ENCODE measurements at regions of chr18 and their contacts with region 1.

Region 1: DNA sequence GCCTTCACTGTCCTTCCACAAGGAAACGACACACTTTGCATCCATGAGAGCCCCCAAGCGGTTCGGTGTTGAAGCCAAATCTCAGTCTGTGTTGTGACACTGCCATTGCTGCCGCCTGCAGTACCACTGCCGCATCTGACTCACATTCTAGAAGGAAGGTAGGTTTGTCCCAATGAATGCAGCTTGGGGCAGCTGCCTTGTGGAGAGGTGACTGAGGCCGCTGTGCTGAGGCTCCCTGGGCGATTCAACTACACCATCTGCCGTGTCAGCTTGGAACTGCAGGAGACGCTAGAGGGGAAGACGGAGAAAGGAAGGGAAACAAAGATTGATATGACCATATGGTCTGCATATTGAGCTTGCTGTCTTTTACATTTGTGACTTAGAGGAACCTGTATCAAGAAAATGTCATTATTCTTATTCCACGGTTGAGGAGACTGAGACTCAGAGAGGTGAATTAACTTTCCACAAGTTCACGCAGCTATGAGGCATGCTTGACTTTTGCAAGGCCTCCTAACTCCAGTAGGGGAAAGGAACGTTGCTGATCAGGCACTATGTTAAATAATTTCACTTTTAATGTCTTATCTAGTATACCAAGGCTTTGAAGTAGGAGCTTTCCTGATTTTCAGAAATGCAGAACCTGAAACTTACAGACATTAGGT is 43.5 kb upstream of the LMAN1 start:
- DNase-seq: peak; percentile 88
- ATAC-seq: peak; percentile 100
- H3K4me3 Mint-ChIP-seq: no peak overlapping the region
- H3K27ac Mint-ChIP-seq: no peak overlapping the region
- H3K4me1 Mint-ChIP-seq: no peaks in the 10 kb centered on the region
- H3K27me3 Mint-ChIP-seq: no peaks in the 10 kb centered on the region

Region 2: DNA sequence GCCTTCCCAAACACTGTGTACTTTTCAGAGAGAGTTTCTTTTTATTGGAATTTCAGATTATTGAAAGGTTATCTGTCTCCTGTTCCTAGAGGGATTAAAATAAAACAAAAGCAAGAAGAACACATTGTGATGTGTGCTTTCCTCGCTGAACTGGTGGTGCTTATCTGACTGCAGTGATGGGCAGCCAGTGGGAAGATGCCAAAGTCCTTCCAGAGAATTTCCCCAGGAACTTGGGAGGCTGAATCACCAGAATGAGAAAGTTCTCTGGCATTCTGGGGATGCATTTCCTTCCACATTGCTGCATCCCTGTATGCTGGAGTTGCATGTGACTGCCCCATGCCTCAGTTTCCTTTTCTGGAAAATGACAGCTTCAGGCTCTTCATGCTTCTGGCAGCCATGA is 316.8 kb before region 1 on chr18:
- CTCF ChIA-PET with region 1: interaction called, 12 read pairs
- POLR2A ChIA-PET with region 1: no interaction called
- intact Hi-C with region 1: loop called (anchors 5 kb)
- DNase-seq: no peak
- ATAC-seq: no peak
- H3K4me3 Mint-ChIP-seq: no peak overlapping the region
- H3K27ac Mint-ChIP-seq: no peak overlapping the region
- H3K4me1 Mint-ChIP-seq: peaks cover 12% of the 10 kb centered on the region
- H3K27me3 Mint-ChIP-seq: peaks cover 13% of the 10 kb centered on the region

Region 3: GRCh38 chr18:59268721-59269562 is 133.6 kb before region 1 on chr18:
- CTCF ChIA-PET with region 1: interaction called, 21 read pairs
- POLR2A ChIA-PET with region 1: no interaction called
- intact Hi-C with region 1: loop called in 1 of 2 experiments (anchors 2 kb)
- DNase-seq: peak; percentile 82
- ATAC-seq: peak; percentile 76
- H3K4me3 Mint-ChIP-seq: peak overlapping the region; percentile 32
- H3K27ac Mint-ChIP-seq: no peak overlapping the region
- H3K4me1 Mint-ChIP-seq: peaks cover 32% of the 10 kb centered on the region
- H3K27me3 Mint-ChIP-seq: peaks cover 77% of the 10 kb centered on the region

Region 4: GRCh38 chr18:59308248-59308937 is 94.2 kb before region 1 on chr18:
- CTCF ChIA-PET with region 1: interaction called, 130 read pairs
- POLR2A ChIA-PET with region 1: no interaction called
- intact Hi-C with region 1: loop called (anchors 2 kb)
- DNase-seq: peak; percentile 82
- ATAC-seq: peak; percentile 95
- H3K4me3 Mint-ChIP-seq: peak overlapping the region; percentile 20
- H3K27ac Mint-ChIP-seq: no peak overlapping the region
- H3K4me1 Mint-ChIP-seq: no peaks in the 10 kb centered on the region
- H3K27me3 Mint-ChIP-seq: peaks cover 42% of the 10 kb centered on the region

Region 5: DNA sequence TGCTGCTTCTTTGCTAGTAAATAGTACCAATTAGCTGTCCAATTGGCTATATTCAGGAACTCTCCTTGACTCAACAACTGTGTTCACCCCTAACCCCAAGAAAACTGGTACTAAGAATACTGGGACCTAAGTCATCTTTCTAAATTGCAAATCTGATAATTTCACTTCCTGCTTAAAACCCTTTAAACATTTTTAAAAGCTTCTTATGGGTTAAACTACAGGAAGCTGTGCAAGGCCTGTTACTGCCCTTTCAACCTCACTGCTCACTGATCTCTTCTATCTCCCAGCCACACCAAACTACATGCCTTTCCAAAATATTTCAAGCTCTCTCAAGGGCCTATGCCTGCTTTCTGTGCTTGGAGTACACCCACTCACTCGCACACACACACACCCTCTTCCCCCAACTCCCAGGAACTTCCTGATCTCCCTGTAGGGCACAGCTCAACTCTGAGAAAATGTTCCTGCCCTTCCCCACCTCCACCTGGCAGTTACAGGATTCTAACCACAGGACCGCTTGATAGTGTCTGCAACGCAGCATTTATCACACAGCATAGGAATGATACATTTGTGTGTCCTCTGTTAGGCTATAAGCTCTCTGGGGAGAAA is 50.2 kb before region 1 on chr18:
- CTCF ChIA-PET with region 1: interaction called, 15 read pairs
- POLR2A ChIA-PET with region 1: no interaction called
- intact Hi-C with region 1: loop called in 1 of 2 experiments (anchors 5 kb)
- DNase-seq: no peak
- ATAC-seq: no peak
- H3K4me3 Mint-ChIP-seq: no peak overlapping the region
- H3K27ac Mint-ChIP-seq: peak overlapping the region; percentile 59
- H3K4me1 Mint-ChIP-seq: peaks cover 29% of the 10 kb centered on the region
- H3K27me3 Mint-ChIP-seq: no peaks in the 10 kb centered on the region

Region 6: DNA sequence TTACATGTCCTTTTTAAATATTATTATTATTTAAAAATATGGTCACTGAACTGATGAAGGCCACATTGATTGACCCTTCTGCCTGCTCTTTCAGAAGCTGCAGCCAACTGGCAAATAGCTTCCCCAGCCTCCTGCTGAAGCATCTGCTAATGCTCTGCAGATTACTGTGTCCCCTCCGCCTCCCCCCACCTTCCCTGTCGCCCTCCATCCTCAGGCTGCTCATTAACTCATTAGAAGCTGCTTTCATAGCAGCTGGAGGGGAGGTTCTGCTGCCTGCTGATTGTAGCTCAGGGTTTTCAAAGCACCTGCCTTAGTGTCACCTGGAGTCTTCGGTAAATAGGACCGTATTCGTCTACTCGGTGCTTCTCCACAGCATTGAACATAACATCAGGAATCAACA is 18.7 kb before region 1 on chr18:
- CTCF ChIA-PET with region 1: interaction called, 12 read pairs
- POLR2A ChIA-PET with region 1: interaction called, 5 read pairs
- intact Hi-C with region 1: no loop called
- DNase-seq: no peak
- ATAC-seq: no peak
- H3K4me3 Mint-ChIP-seq: no peak overlapping the region
- H3K27ac Mint-ChIP-seq: no peak overlapping the region
- H3K4me1 Mint-ChIP-seq: peaks cover under 1% of the 10 kb centered on the region
- H3K27me3 Mint-ChIP-seq: peaks cover 15% of the 10 kb centered on the region

Region 7: GRCh38 chr18:59459369-59460079 is 57.0 kb after region 1 on chr18:
- CTCF ChIA-PET with region 1: no interaction called
- POLR2A ChIA-PET with region 1: no interaction called
- intact Hi-C with region 1: no loop called
- DNase-seq: no peak
- ATAC-seq: no peak
- H3K4me3 Mint-ChIP-seq: no peak overlapping the region
- H3K27ac Mint-ChIP-seq: no peak overlapping the region
- H3K4me1 Mint-ChIP-seq: no peaks in the 10 kb centered on the region
- H3K27me3 Mint-ChIP-seq: peaks cover 17% of the 10 kb centered on the region